ENCODE measurements at regions of chr6 and their contacts with region 1.

Region 1: DNA sequence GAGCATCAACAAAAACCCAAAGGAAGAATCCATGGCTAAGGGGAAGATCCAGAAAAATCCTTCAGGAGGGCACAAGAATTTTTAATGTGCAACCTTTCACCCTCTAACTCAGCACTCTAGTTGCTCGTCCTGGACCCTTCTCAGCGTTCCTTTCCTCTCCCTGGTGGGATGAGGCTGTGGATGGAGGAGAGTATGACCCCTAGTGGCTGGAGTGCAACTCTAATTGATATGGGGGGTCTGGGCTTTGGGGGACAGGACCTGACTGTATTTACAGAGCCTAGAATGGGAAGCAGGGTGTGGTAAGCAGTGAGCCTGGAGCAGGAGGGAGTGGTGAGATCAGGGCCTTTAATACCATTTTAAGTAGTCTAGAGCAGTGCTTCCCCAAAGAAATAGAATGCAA is 83.9 kb upstream of the CEP85L start:
- DNase-seq: no peak
- H3K4me3 Mint-ChIP-seq: no peak overlapping the region
- H3K27ac Mint-ChIP-seq: no peak overlapping the region
- H3K4me1 Mint-ChIP-seq: peaks cover 33% of the 10 kb centered on the region
- H3K27me3 Mint-ChIP-seq: no peaks in the 10 kb centered on the region

Region 2: GRCh38 chr6:118697554-118697953 is 37.8 kb before region 1 on chr6:
- CTCF ChIA-PET with region 1: interaction called, 3 read pairs
- intact Hi-C with region 1: loop called (anchors 5 kb)
- DNase-seq: peak; percentile 41
- H3K4me3 Mint-ChIP-seq: no peak overlapping the region
- H3K27ac Mint-ChIP-seq: no peak overlapping the region
- H3K4me1 Mint-ChIP-seq: peaks cover 73% of the 10 kb centered on the region
- H3K27me3 Mint-ChIP-seq: no peaks in the 10 kb centered on the region

Region 3: DNA sequence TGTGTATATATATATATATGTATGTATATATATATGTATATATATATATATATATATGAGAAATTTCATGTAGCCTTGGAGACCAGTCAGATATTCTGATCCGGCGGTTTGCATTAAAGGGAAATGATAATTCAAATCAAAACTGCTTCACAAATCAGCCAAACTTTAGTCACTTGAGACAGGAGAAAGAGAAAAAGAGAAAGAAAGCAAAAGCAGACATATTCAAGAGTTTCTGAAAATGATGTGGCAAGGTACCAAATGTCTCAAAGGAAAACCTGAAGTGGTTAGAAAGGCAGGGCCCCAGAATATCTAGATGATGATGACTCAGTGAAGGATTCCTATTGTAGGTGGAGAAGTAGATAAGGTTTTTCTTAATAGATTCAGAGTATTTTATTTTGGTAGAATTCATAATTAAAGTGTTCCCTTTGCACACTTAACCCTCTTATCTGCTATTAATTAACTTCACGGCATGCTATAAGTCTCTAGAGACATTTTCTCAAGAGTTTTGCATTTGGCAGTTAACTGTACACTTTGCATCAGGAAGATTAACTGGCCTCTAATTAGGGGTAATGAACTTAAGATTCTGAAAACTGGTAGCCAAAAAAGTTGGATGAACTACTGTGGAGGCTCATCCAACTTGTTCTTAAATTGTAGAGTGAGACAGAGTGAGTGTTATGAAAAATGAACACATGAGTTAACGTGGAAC is 108.5 kb after region 1 on chr6:
- CTCF ChIA-PET with region 1: no interaction called
- intact Hi-C with region 1: no loop called
- DNase-seq: peak; percentile 50
- H3K4me3 Mint-ChIP-seq: no peak overlapping the region
- H3K27ac Mint-ChIP-seq: peak overlapping the region; percentile 2
- H3K4me1 Mint-ChIP-seq: peaks cover 23% of the 10 kb centered on the region
- H3K27me3 Mint-ChIP-seq: no peaks in the 10 kb centered on the region

Measured in activated naive CD4-positive, alpha-beta T cell treated with anti-CD3 and anti-CD28 coated beads for 36 hours (primary cell).